Right ventricle myocardium superior (tissue), 1 donor: ENCODE measurements at regions of chr19 and their contacts with region 1.

Region 1: GRCh38 chr19:1189419-1189818 is 15.4 kb upstream of the SBNO2 start:
- DNase-seq: no peak
- ATAC-seq: no peak

Region 2: DNA sequence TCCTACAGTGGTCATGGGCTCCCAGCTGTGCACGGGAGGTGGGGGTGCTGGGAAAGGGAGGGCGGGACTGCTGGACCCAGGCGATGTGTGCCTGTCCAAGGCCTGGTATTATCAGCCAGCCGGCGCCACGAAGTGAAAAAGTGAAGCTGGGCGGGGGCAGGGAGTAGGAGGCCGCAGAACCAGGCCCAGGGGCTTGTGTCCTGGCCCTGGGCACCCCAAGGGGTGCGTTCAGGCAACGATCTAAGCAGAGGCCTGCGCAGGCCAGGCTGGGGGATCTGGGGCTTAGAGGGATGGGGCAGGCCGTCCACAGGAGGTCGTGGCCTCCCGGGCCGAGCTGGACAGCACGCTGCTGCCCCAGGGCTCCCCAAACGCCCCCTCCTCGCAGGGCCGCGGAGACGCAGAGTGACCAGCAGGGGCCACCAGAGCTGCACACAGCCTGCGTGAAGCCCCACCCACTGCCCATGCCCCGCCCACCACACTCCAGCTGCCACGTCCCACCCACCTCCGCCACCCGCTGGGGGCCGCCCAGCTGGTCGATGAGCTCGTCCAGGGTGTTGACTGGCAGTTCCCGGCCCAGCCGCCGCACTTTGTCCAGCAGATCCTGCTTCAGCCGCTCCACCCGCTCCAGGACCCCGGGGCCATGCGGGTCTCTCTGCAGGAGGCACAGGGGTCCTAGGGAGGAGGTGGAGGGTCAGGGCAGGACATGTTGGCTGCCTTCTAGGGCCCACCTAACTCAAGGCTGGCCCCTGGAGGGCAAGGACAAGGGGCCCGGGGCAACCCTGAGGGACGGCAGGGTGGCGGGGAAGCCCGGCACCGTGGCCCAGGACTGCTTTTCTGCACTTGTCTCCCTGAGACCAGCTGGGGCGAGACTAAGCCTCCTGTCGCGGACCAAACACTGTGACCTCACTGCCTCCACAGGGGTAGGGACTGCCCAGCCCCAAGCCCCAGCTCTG is 76.1 kb before region 1 on chr19:
- intact Hi-C with region 1: loop called (anchors 5 kb)
- DNase-seq: peak; percentile 98
- ATAC-seq: peak; percentile 91

Region 3: GRCh38 chr19:1249298-1249989 is 60.0 kb after region 1 on chr19:
- intact Hi-C with region 1: no loop called
- DNase-seq: peak; percentile 97
- ATAC-seq: peak; percentile 13